K562 (cell line): ENCODE measurements at regions of chr9 and their contacts with region 1.

Region 1: DNA sequence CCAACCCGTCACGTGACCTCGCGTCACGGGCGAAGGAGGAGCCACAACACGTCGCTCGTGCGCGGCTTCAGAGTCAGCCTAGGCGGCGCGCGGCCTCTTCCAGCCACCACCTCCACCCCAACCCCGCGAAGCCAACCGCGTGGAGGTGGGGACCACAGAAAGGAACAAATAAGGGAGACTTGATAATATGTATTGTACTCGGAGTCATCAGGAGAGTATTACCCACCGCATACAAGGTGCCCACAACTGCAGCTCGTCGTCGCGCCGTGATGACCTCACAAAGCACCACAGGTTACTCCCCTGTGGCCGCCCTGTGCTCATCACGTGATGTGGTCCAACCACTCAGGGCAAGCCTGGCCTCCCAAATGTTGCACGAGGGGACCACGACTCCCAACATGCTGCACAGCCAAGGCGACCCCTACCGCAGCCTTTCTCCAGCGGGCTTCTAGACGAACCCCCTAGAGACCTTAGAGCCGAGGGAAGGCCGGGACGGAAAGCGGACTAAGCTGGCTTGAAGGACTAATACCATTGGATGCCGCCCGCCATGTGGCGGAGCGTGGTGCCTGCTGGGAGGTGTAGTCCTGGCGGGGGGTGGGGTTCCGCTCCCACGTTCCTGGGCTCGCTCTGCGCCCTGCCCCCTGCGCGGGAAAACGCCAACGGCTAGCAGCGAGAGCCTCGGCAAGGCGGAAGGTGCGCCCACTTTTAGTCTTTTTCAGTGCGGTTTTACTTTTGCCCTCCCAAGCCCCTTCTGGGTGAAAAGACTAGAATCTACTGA is 423 bp upstream of the UBAP2 start:
- DNase-seq: peak; percentile 81 to 96 (median 87)
- ATAC-seq: peak; percentile 84
- H3K4me3 ChIP-seq: peak overlapping the region; percentile 72
- H3K27ac ChIP-seq: peak overlapping the region; percentile 98
- H3K4me1 ChIP-seq: peaks cover 5 to 15% of the 10 kb centered on the region in 2 experiments; a peak in 4 of 5 replicates
- H3K27me3 ChIP-seq: no peaks in the 10 kb centered on the region
- CTCF ChIP-seq: no peak
- EP300 ChIP-seq: peak; percentile 71
- POLR2A ChIP-seq: peak; percentile 78
- RAD21 ChIP-seq: no peak

Region 2: DNA sequence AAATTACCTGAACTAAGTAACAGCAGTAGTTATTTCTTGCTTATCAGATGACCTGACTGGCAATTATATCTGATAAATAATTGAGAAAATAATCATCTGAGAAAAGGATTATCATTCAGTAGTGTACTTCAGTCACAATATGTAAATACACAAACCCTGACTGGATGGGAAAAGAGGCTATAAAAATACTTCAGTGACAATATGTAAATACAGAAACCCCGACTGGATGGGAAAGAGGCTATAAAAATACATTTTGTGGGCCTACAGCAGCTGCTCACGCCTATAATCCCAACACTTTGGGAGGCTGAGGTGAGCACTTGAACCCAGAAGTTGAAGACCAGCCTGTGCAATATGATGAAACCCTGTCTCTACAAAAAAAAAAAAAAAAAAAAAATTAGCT is 11.5 kb before region 1 on chr9:
- CTCF ChIA-PET with region 1: no interaction called
- POLR2A ChIA-PET with region 1: interaction called, 12 read pairs
- in situ Hi-C with region 1: no loop called
- intact Hi-C with region 1: no loop called
- DNase-seq: no peak
- ATAC-seq: no peak
- H3K4me3 ChIP-seq: no peak overlapping the region
- H3K27ac ChIP-seq: no peak overlapping the region
- H3K4me1 ChIP-seq: no peaks in the 10 kb centered on the region; a peak in 1 of 5 replicates
- H3K27me3 ChIP-seq: no peaks in the 10 kb centered on the region
- CTCF ChIP-seq: no peak
- EP300 ChIP-seq: no peak
- POLR2A ChIP-seq: no peak
- RAD21 ChIP-seq: no peak

Region 3: GRCh38 chr9:34059281-34059680 is 10.2 kb after region 1 on chr9:
- CTCF ChIA-PET with region 1: no interaction called
- POLR2A ChIA-PET with region 1: interaction called, 12 read pairs
- in situ Hi-C with region 1: no loop called
- intact Hi-C with region 1: no loop called
- DNase-seq: no peak
- ATAC-seq: no peak
- H3K4me3 ChIP-seq: no peak overlapping the region
- H3K27ac ChIP-seq: no peak overlapping the region
- H3K4me1 ChIP-seq: no peaks in the 10 kb centered on the region; a peak in 2 of 5 replicates
- H3K27me3 ChIP-seq: no peaks in the 10 kb centered on the region
- CTCF ChIP-seq: no peak
- EP300 ChIP-seq: no peak
- POLR2A ChIP-seq: no peak
- RAD21 ChIP-seq: no peak